ENCODE measurements at regions of chr12 and their contacts with region 1.

Region 1: DNA sequence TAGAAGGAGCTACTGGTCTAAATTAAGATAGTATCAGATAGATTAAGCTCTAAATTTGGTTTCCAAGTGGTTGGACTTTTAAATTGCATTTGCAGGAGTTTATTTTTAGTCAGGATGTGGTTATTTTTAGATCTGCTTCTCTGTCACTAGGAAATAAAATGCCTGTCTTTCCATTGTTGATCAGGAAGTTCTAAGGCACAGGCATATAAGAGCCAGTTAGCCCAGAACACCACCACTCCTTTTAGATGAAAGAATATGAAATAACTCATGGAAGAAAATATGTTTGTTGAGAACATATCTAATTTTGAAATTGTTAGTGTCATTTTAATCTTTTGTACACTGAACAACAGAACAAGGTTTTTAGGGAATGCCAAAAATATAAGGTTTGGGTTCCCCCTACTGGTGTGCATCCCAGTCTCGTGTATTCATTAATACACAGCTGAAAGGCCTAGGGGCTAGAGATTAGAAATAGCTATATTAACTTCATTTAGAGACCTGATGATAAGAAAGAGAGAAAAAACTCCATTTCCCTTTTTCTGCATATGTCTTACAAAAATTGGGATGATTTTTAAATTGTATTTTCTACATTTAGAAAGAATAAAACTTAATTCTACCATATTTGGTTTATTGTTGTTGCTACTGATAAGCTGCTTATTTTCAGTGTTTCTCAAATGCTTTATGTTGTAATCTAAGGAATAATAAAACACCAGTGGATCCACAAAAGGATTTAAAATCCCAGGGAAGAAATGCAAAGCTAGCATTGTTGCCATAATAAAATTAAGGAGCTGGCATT is 67.2 kb downstream of the RIC8B start:
- DNase-seq: no peak

Region 2: DNA sequence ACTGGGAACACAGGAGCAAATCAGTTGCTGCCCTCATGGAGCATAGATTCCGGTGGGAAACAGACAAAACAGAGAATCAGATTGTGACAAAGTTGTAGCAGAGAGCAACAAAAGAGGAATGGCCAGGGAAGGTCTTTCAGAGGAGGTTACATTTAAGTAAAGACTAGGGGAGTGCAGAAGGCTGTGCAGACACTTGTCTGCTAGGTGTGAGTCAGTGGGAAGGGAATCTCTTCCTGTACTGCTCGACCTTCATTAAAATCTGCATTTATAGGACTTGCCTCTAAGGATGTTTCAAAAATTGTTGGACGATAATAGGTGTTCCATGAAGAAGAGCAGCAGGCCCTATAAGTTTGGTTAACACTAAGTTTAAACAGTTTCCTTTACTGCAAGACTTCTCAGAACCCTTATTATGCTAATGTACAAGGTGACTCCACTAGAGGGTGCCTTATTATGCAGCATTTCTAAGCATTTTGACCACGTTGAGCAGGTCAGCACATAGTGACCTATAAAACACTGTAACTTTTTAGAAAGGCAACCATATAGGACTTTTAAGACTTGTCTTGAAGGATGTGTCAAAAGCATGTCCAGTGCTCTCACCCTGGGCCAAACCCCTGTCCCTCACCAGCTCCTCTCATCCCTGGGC is 159.0 kb before region 1 on chr12:
- intact Hi-C with region 1: loop called (anchors 5 kb)
- DNase-seq: no peak

Region 3: DNA sequence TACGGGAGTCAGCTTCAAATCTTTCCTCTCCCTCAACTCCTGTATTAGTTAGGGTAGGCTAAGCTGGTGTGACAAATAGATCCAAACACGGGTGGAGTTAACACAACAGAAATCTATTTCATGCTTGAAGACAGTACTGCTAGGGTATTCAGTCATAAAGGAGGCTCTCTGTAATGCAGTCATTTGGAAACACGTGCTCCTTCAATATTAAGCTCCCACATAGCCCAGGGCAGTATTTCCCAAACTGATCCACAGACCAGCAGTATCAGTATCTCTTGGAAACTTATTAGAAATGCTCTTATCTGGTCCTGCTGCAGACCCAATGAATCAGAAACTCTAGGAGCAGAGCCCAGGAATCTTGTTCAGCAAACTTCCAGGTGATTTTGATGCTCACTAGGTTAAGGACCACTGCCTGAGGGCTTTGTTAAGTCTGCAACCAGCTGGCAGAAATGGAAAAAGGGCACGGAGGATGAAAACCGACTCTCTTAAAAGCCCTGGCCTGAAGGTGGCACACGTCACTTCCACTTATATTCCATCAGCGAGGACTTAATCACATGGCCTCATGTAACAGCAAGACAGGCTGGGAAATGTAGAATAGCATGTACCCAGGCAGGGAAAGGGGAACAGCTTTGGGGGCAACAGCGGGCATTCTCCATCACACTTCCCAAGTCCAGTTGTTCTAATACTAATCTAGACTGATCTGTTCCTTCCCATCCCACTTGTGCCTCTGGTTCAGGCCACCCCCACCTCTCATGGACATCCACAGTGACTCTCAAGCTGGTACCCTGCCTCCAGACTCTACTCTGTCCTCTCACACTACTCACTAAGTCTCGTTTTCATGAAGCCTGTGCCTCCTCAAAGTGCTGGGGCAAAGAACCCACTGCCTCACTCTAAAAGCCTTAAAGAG is 105.4 kb before region 1 on chr12:
- intact Hi-C with region 1: loop called (anchors 2 kb)
- DNase-seq: no peak

Region 4: DNA sequence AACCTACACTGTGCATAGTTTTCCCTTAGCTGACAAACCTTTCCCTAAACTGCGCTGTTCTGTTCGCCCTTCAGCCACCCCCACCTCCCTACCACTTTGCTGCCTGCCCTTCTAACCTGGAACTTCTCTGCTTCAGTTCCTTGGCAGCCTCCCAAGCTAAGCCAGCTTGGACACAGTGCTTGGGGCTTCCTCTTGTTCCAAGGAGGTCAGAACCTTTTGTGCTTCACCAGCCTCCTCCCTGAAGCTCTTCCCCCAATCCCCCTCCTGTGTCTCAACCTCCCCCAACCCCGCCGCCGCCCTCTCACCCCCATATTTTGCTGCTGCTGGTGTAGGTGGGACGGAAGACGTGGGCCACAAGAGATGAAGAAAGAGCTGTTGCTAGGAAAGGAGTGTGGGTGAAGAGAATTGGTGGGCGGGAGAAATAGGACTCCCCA is 75.3 kb before region 1 on chr12:
- intact Hi-C with region 1: loop called (anchors 5 kb)
- DNase-seq: no peak

Region 5: DNA sequence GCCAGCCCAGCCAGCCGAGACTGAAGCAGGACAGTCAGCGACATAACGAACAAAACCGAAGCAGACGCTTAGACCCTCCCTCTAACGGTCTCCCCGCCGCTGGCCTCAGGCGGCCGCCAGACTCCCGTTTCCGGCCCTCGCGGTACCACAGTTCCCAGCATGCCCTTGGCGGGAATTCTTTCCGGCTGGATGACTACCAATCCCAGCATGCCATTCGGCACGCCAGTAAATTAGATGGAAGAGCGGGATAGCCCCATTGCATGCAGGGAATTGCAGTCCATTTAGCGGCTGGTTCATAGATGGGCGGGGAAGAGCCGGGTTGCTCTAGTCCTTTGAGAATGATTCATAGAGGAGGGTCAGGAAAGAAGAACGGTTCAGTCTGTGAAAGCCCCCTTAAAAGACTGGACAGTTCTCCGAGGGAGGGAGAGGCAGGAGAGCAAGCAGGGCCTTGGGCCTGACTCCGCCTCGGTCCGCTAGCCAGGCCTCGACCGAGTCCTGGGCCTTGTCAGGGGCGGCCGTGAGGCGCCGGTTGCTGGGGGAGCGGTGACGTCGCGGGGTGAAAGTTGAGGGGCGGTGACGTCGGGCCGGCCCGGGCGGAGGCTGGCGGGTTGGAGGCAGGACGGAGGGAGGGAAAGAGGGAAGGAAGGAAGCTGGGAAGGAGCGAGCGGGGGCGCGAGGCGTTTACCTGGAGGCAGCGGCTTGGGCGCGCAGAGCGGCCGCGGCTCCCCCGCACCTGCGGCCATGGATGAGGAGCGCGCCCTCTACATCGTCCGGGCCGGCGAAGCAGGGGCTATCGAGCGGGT is 67.5 kb before region 1 on chr12 and contains the start of gene RIC8B:
- intact Hi-C with region 1: loop called (anchors 2 kb)
- DNase-seq: peak; percentile 96
- total RNA-seq, gene RIC8B: 23.5 TPM

Region 6: DNA sequence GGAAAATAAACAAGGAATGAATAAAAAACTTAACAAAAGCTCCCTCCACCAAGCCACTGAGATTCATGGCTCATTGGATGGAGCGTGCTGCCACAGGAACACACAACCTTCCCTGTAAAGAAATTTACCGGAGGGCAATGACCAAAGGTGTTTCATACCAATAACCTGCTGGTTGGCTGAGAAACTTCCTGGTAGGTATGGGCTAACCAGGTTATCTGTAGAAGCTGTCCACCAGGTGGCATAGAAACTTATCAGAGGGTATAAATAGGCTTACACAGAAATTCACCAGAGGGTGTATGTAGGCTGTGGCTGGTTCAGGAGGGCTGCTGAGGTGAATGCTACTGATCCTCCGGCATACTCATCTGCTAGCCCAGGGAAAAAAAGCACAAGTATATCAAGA is 172.3 kb after region 1 on chr12:
- intact Hi-C with region 1: no loop called
- DNase-seq: no peak